Esophagus squamous epithelium (tissue), 5 donors: ENCODE measurements at regions of chr16 and their contacts with region 1.

Region 1: GRCh38 chr16:30922960-30923535 is 324 bp upstream of the FBXL19 start:
- DNase-seq: peak; percentile 91
- H3K4me3 ChIP-seq: peak overlapping the region; percentile 74 to 87 (median 76)
- H3K27ac ChIP-seq: peak overlapping the region; percentile 88 to 99 (median 96)
- H3K4me1 ChIP-seq: peaks cover 18 to 57% (median 25%) of the 10 kb centered on the region in 3 donors
- H3K27me3 ChIP-seq: no peaks in the 10 kb centered on the region
- CTCF ChIP-seq: no peak
- POLR2A ChIP-seq: no peak

Region 2: GRCh38 chr16:30820952-30821760 is 101.9 kb before region 1 on chr16:
- intact Hi-C with region 1: no loop called
- DNase-seq: no peak
- H3K4me3 ChIP-seq: no peak overlapping the region
- H3K27ac ChIP-seq: peak overlapping the region in 2 of 4 donors; percentile 27 to 48
- H3K4me1 ChIP-seq: peaks cover 0 to 24% (median 4%) of the 10 kb centered on the region in 3 donors
- H3K27me3 ChIP-seq: no peaks in the 10 kb centered on the region
- CTCF ChIP-seq: no peak
- POLR2A ChIP-seq: no peak

Region 3: DNA sequence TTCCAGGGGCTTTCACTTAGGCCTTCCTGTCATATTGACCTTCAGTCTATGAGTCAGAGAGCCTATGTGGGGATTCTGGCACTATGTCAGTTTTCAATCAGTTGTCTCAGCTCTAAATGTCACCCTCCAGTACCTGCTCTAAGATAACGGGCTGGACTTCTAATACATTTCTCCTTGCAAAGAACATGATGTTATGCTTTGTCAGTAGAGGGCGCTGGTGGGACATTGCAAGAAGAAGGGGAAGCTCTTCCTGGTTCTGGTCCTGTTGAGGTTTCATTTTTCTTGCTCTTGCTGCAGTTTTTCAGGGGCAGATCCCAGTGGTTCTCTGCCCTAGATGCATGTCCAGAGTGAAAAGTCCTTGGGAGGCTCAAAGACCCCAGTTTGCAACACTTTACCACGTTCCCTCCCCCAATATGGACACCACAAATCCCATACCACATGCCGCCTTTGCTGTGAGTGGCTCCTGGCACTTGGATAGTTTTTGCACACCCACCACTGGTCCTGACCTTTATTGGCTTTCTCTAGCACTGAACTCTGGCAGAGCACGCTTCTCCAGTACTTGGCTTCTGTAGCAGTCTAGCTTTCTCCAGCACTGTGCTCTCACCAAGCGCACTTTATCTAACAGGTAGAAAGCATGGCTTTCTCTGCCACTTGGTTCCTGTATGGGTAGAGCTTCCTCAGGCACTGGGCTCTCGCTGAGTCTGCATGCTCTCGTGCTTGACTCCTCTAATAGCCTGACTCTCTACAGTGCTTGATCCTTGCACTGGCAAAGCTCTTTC is 78.2 kb before region 1 on chr16:
- intact Hi-C with region 1: loop called (anchors 5 kb)
- DNase-seq: peak; percentile 27
- H3K4me3 ChIP-seq: peak overlapping the region in 3 of 4 donors; percentile 8 to 46 (median 33)
- H3K27ac ChIP-seq: peak overlapping the region; percentile 2 to 55 (median 36)
- H3K4me1 ChIP-seq: peaks cover 6 to 14% (median 7%) of the 10 kb centered on the region in 3 donors
- H3K27me3 ChIP-seq: no peaks in the 10 kb centered on the region
- CTCF ChIP-seq: peak; percentile 73 to 92 (median 84)
- POLR2A ChIP-seq: no peak